ENCODE measurements at regions of chr2 and their contacts with region 1.

Region 1: GRCh38 chr2:98012561-98012991 is 16.8 kb upstream of the TMEM131 start:
- DNase-seq: peak; percentile 68
- H3K4me3 Mint-ChIP-seq: no peak overlapping the region
- H3K27ac Mint-ChIP-seq: peak overlapping the region; percentile 77
- H3K4me1 Mint-ChIP-seq: peaks cover 35% of the 10 kb centered on the region
- H3K27me3 Mint-ChIP-seq: no peaks in the 10 kb centered on the region

Region 2: DNA sequence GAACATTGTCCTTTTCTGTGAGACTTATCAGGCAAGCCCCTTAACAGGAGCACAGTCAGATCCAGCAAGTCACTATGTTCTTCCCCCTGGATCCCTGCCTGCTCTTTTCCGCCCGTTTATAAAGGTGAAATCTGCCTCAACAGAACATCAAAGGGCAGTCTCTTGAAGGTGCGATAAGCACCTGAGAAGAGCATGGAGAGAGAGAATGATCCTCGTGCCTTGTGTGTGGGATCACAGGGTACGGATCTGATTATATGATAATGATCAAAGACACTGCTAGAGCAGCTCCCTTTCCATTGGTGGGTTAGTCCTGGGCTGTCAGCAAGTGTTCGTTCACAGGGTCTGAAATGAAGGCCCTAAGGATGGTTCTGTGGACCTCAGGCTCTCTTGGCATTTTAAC is 192.8 kb before region 1 on chr2:
- intact Hi-C with region 1: no loop called
- DNase-seq: peak; percentile 43
- H3K4me3 Mint-ChIP-seq: no peak overlapping the region
- H3K27ac Mint-ChIP-seq: no peak overlapping the region
- H3K4me1 Mint-ChIP-seq: no peaks in the 10 kb centered on the region
- H3K27me3 Mint-ChIP-seq: no peaks in the 10 kb centered on the region

Region 3: DNA sequence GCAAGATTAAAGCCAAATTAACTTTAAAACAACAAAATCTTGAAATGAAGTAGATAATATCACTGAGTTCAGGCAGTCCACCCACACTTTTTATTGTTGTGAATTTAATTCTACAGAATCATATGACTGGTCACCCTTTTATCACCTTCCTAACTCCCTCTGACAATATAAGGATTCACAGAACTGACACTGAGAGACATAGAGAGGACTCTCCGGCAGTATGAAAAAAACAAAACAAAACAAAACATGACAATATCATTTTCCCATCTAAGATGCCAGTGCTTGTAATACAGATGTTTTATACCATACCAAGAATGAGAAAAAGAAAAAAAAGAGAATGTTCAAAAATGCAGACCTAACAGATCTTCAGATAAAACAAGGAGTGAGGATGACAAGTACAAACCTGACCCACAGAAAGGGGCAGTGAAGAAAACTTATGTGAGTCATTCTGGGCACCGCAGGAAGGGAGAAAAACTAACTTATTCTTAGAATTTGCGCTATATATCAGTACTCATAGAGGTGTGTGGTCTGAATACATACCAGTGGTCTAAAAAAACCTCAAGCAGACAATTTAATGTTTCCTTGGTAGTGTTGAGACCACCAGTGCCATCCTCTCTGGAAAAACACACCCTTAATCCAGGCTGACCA is 162.6 kb before region 1 on chr2:
- intact Hi-C with region 1: loop called (anchors 1 kb)
- DNase-seq: no peak
- H3K4me3 Mint-ChIP-seq: peak overlapping the region; percentile 41
- H3K27ac Mint-ChIP-seq: peak overlapping the region; percentile 61
- H3K4me1 Mint-ChIP-seq: peaks cover 30% of the 10 kb centered on the region
- H3K27me3 Mint-ChIP-seq: no peaks in the 10 kb centered on the region

Region 4: GRCh38 chr2:97979894-97980293 is 32.7 kb before region 1 on chr2:
- intact Hi-C with region 1: loop called (anchors 1 kb)
- DNase-seq: no peak
- H3K4me3 Mint-ChIP-seq: no peak overlapping the region
- H3K27ac Mint-ChIP-seq: no peak overlapping the region
- H3K4me1 Mint-ChIP-seq: peaks cover 5% of the 10 kb centered on the region
- H3K27me3 Mint-ChIP-seq: no peaks in the 10 kb centered on the region

Region 5: GRCh38 chr2:98026927-98027522 is 14.4 kb after region 1 on chr2:
- intact Hi-C with region 1: loop called (anchors 1 kb)
- DNase-seq: no peak
- H3K4me3 Mint-ChIP-seq: peak overlapping the region; percentile 58
- H3K27ac Mint-ChIP-seq: peak overlapping the region; percentile 58
- H3K4me1 Mint-ChIP-seq: peaks cover 17% of the 10 kb centered on the region
- H3K27me3 Mint-ChIP-seq: peaks cover 5% of the 10 kb centered on the region

Region 6: DNA sequence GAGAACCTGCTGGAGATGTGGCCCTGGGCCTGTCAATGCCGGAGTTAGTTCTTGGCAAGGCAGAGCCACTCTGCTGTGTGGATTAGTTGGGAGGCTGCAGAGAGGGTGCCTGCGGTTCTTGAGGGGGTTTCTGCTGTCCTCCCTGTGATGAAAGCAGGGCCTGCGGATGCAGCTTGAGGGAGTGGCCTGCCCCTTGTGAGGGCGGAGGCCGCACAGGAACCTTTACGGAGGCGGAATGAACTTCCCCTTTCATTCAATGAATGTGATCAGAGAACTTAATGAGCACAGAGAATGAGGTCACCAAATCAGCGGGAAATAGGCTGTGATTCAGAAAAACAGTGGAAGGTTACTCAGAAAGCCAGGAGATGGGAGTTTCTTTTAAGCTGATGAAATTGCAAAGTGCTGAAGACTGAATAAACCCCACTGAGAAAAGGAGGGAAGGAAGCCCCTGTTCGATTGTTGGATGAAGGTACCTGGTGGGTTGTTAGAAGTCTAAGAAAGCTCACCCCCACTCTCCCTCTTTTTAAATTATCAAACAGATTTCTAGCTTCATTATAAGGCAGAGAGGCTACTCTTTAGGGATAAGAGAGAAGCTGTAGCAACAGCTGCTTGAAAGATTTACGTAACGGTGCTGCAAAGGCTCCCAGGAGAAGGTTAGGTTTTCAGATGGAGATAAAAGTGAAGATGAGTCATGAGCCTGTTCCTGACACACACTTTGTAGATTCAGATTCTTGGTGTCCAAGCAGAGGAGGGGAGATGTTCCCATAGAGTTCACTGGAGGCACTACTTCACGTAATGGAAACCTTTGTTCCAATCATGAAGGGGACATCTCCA is 121.8 kb after region 1 on chr2:
- intact Hi-C with region 1: loop called (anchors 1 kb)
- DNase-seq: peak; percentile 82
- H3K4me3 Mint-ChIP-seq: peak overlapping the region; percentile 15
- H3K27ac Mint-ChIP-seq: peak overlapping the region; percentile 56
- H3K4me1 Mint-ChIP-seq: peaks cover 15% of the 10 kb centered on the region
- H3K27me3 Mint-ChIP-seq: no peaks in the 10 kb centered on the region

Measured in activated CD4-positive, alpha-beta T cell treated with anti-CD3 and anti-CD28 coated beads, Interleukin-2, amount 10 ng/mL, durations not matched to agents 24 days and 14 days (primary cell).